ENCODE measurements at regions of chr5 and their contacts with region 1.

Region 1: GRCh38 chr5:106080535-106080934 is 1590.2 kb downstream of the EFNA5 start:
- DNase-seq: no peak
- H3K4me3 ChIP-seq: no peak overlapping the region
- H3K27ac ChIP-seq: no peak overlapping the region
- H3K4me1 ChIP-seq: no peaks in the 10 kb centered on the region
- H3K27me3 ChIP-seq: no peaks in the 10 kb centered on the region
- CTCF ChIP-seq: no peak
- POLR2A ChIP-seq: no peak

Region 2: DNA sequence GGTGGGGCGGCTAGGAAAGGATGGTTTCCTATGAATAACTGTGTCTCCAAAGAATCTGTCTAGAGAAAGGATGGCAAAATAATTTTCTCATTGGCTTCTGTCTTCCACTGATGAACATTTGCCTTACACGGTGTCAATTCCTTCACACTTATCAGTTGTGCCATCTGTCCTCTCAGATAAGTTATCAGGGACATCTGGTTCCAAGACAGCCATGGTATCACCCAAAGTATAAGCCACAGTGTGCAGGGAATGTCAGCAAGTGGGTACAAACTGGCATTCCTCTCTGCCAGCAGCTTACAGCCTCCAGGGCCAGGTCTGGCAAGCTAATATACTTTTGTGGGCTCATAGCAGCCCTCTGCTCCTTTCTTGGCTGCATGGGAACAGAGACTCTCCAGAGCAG is 498.2 kb after region 1 on chr5:
- intact Hi-C with region 1: loop called (anchors 5 kb)
- DNase-seq: no peak
- H3K4me3 ChIP-seq: no peak overlapping the region
- H3K27ac ChIP-seq: no peak overlapping the region
- H3K4me1 ChIP-seq: no peaks in the 10 kb centered on the region
- H3K27me3 ChIP-seq: no peaks in the 10 kb centered on the region
- CTCF ChIP-seq: no peak
- POLR2A ChIP-seq: no peak

Measured in breast epithelium (tissue), 4 donors.